ENCODE measurements at regions of chr17 and their contacts with region 1.

Region 1: DNA sequence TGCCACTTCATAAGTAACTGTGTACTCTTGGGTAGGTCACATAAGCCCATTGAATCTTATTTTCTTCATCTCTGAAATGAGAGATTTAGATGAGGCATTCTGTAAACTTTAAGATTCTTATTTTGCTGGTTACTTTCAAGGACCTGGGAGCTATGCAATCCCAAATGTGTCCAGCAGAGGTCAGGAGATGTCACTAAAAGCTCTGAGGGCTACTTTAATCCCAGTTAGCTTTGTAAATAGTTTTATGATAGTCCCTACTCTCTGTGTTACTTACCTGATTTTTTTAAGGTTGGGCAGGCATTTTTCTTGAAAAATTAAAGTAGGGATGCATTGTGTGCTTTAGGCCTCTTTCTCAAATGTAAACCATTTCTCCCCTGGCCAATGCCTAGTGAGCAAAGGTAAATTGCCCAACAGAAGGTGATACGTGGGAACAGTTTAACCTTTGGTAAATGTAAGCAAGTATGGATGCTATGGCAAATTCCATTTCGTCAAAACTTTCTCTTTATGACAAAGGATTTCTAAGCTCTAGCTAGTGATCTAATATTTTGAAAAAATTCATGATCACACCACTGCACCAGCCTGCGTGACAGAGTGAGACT is 57.1 kb upstream of the WSB1 start:
- DNase-seq: peak; percentile 57
- H3K4me3 ChIP-seq: no peak overlapping the region
- H3K27ac ChIP-seq: no peak overlapping the region
- H3K4me1 ChIP-seq: no peaks in the 10 kb centered on the region
- H3K27me3 ChIP-seq: no peaks in the 10 kb centered on the region
- CTCF ChIP-seq: peak; percentile 97

Region 2: DNA sequence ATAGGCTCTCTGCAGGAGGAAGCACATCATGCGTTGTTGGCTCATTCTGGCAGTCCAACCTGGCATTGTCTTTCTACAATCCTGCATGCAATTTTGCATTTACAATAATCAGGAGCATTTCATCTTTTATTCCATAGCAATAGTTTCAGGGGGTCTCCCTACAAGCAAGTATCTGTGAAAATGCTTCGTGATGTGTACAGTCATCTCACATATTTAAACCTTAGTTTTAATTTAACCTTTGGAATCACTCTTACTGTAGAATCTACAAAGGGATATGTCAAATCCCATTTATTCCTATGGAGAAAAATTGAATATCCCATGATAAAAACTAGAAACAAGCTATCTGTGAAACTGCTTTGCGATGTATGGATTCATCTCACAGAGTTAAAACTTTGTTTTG is 54.9 kb before region 1 on chr17:
- intact Hi-C with region 1: no loop called
- DNase-seq: no peak
- H3K4me3 ChIP-seq: no peak overlapping the region
- H3K27ac ChIP-seq: no peak overlapping the region
- H3K4me1 ChIP-seq: no peaks in the 10 kb centered on the region
- H3K27me3 ChIP-seq: no peaks in the 10 kb centered on the region
- CTCF ChIP-seq: no peak

Region 3: GRCh38 chr17:27353461-27354050 is 116.7 kb after region 1 on chr17:
- intact Hi-C with region 1: loop called (anchors 10 kb)
- DNase-seq: peak; percentile 92
- H3K4me3 ChIP-seq: peak overlapping the region; percentile 77
- H3K27ac ChIP-seq: peak overlapping the region; percentile 97
- H3K4me1 ChIP-seq: peaks cover 34% of the 10 kb centered on the region
- H3K27me3 ChIP-seq: no peaks in the 10 kb centered on the region
- CTCF ChIP-seq: peak; percentile 97

Measured in left ventricle myocardium inferior (tissue), 1 donor.